ENCODE measurements at regions of chr2 and their contacts with region 1.

Region 1: GRCh38 chr2:42086500-42086953 is 38.7 kb downstream of the PKDCC start:
- DNase-seq: peak; percentile 45 to 73
- H3K4me3 ChIP-seq: no peak overlapping the region
- H3K27ac ChIP-seq: no peak overlapping the region
- H3K4me1 ChIP-seq: no peaks in the 10 kb centered on the region
- H3K27me3 ChIP-seq: no peaks in the 10 kb centered on the region
- CTCF ChIP-seq: peak; percentile 98

Region 2: DNA sequence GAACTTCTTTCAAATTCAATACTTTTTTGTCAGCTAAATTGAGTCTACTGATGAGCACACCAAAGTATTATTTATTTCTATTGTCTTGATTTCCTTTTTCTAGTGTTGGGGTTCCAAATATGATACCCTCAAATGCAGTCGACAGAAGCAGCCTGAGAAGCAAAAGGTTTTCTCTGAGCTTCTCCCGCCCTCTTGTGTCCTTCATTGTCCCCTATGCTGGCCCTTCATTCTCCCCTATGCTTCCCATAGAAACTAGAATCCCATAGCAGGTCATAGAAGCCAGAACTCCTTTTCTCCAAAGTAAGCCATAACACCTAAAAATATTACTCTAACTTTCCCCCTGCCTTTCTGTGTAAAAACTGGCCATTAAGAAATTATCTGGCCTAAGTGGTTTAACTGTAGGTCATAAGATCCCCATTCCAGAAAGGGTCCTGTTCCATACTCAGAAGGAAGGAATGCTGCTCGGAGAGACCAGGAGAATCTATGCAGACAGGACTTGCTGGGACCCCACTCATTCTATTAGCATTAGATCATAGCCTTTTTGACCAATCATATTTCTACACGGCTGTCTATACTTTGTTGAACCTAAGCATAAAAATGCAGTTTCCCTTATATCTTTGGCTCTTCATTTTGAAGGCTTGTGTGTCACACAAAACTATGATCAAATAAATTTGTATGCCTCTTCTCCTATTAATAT is 803.3 kb before region 1 on chr2:
- CTCF ChIA-PET with region 1: interaction called, 19 read pairs
- POLR2A ChIA-PET with region 1: no interaction called
- intact Hi-C with region 1: no loop called
- DNase-seq: no peak
- H3K4me3 ChIP-seq: no peak overlapping the region
- H3K27ac ChIP-seq: no peak overlapping the region
- H3K4me1 ChIP-seq: no peaks in the 10 kb centered on the region
- H3K27me3 ChIP-seq: no peaks in the 10 kb centered on the region
- CTCF ChIP-seq: no peak

Region 3: DNA sequence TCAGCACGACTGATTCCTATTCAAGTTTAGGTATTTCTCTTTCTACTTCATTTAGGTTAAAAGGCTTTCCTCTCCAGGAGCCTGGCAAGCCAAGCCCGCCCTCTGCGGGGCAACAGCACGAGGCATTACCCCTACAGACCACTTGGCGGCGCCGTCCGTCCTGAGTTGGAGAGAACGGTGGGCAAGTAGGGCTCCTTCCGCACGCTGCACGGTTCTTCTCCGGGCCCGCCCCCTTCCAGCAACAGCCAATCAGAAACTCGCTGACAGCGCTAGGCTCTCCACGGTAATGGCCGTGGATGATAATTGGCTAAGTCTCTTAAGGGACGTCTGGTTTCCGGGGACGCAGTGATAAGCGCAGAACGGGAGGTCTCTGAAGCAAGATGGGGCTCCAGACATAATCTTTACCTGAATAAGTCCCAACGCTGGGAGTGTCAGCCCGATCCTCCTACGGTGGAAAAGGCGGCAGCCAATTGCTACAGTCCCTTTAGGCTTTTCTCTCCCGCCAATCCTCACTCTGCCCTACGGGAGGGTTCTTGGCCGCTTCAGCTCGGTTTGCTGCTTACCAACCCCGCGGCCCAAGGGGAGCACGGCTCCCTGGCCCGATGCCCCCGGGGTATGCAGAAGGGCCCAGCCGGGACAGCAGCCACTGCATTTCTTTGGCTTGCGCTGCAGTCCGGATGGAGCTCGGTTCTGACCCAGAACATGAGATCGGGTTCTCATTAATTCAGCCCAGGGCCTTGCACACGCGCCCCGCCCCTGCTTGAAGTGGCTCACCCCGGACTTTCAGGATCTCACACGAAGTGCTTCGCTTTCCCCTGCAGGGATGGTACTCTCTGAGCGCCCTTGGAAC is 245.6 kb before region 1 on chr2:
- CTCF ChIA-PET with region 1: no interaction called
- POLR2A ChIA-PET with region 1: no interaction called
- intact Hi-C with region 1: loop called (anchors 1 kb)
- DNase-seq: peak; percentile 97
- H3K4me3 ChIP-seq: peak overlapping the region; percentile 74
- H3K27ac ChIP-seq: no peak overlapping the region
- H3K4me1 ChIP-seq: peaks cover 13% of the 10 kb centered on the region
- H3K27me3 ChIP-seq: no peaks in the 10 kb centered on the region
- CTCF ChIP-seq: peak; percentile 99

Region 4: DNA sequence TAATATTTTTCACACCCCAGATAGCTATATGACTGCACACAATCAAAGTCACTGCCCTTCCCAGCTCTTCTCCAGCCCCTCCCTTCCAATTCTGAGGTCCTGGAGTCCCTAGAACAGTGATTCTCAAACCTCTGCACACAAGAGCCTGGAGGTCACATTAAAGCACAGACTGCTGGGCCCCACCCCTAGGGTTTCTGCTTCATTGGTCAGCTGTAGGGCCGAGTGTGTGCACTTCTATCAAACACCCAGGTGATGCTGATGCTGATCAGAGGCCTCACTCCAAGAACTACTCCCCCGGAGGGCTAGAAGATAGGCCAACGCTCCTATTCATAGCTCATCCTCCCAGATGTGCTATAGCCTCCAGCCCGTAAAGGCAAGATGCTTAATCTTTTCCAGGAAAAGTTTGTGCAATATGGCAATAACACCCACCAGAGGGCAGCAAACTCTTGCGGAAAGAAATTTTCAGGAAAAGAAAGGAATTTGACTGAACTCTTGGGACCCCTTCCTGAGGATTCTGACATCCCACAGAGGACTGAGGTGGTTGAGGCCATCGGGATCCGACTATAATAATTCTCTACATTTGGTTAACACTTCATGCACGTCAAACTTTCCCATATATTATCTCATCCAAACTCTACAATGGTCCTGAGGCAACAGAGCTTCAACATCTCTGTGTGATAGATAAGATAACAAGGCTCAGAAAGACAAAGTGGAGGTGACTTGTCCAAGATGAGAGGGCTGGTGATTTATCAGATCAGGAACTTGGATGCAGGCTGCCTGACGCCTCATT is 232.9 kb before region 1 on chr2:
- CTCF ChIA-PET with region 1: interaction called, 18 read pairs
- POLR2A ChIA-PET with region 1: interaction called, 6 read pairs
- intact Hi-C with region 1: loop called (anchors 1 kb)
- DNase-seq: peak in 1 of 2 experiments; percentile 47
- H3K4me3 ChIP-seq: no peak overlapping the region
- H3K27ac ChIP-seq: no peak overlapping the region
- H3K4me1 ChIP-seq: peaks cover 4% of the 10 kb centered on the region
- H3K27me3 ChIP-seq: no peaks in the 10 kb centered on the region
- CTCF ChIP-seq: peak; percentile 98

Region 5: GRCh38 chr2:41869542-41870264 is 216.8 kb before region 1 on chr2:
- CTCF ChIA-PET with region 1: interaction called, 11 read pairs
- POLR2A ChIA-PET with region 1: no interaction called
- intact Hi-C with region 1: loop called (anchors 1 kb)
- DNase-seq: peak in 1 of 2 experiments; percentile 74
- H3K4me3 ChIP-seq: no peak overlapping the region
- H3K27ac ChIP-seq: no peak overlapping the region
- H3K4me1 ChIP-seq: peaks cover 13% of the 10 kb centered on the region
- H3K27me3 ChIP-seq: no peaks in the 10 kb centered on the region
- CTCF ChIP-seq: peak; percentile 98

Region 6: DNA sequence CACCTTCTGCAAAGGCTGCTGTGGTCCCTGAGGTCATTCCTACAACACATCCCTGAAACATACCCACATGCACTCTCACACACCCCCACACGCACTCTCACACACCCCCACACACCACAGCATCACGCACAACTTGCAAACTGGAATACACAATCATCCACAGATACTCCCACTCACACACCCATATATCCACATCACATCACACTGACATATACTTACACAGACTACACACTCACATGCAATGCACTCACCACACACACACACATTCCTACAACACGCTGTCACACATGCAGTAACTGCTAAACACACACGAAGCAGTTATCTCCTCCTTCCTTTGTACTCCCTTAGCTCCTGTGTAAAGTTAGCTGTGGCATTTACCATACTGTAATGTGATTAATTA is 95.8 kb before region 1 on chr2:
- CTCF ChIA-PET with region 1: no interaction called
- POLR2A ChIA-PET with region 1: no interaction called
- intact Hi-C with region 1: no loop called
- DNase-seq: peak in 1 of 2 experiments; percentile 45
- H3K4me3 ChIP-seq: no peak overlapping the region
- H3K27ac ChIP-seq: no peak overlapping the region
- H3K4me1 ChIP-seq: peaks cover 24% of the 10 kb centered on the region
- H3K27me3 ChIP-seq: no peaks in the 10 kb centered on the region
- CTCF ChIP-seq: no peak

Region 7: DNA sequence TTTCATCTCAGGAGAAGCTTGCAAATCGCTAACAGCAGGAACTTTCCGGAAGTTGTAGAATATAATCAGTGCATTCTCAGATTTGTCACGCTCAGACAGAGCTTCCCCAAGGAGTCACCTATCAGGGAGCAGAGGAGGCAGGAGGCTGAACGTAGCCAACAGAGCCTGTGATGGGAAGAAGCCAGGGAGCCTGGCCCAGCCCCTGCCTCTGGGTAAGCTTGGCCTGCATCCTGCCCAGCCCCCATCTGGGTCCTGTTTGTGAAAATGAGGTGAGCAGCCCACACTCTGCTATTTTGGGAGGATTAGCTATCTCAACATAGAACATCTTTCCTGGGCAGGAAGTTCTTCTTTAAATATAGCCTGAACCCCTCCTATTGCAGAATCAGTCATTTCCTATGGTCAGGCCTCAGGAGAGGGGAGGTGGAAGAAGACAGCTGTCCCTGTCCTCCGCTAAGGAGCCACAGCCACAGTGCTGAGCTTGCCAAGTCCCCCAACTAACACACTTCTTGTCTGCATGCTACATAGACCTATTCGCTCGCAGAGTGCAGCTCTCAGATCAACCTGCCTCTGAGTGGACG is 57.9 kb before region 1 on chr2:
- CTCF ChIA-PET with region 1: no interaction called
- POLR2A ChIA-PET with region 1: no interaction called
- intact Hi-C with region 1: no loop called
- DNase-seq: no peak
- H3K4me3 ChIP-seq: no peak overlapping the region
- H3K27ac ChIP-seq: no peak overlapping the region
- H3K4me1 ChIP-seq: 0 out of 2 replicates have a peak, but pooled peaks cover 7% of the 10 kb centered on the region
- H3K27me3 ChIP-seq: no peaks in the 10 kb centered on the region
- CTCF ChIP-seq: no peak

Measured in PC-9 (cell line).